ENCODE measurements at regions of chr20 and their contacts with region 1.

Region 1: GRCh38 chr20:32779500-32780211 is 17.5 kb downstream of the DNMT3B start:
- DNase-seq: peak in 1 of 2 experiments; percentile 86
- H3K4me3 ChIP-seq: no peak overlapping the region
- H3K27ac ChIP-seq: peak overlapping the region; percentile 73; the same call in 1 of the 2 replicates
- H3K4me1 ChIP-seq: peaks cover 22 to 46% (median 30%) of the 10 kb centered on the region in 4 experiments
- H3K27me3 ChIP-seq: no peaks in the 10 kb centered on the region
- CTCF ChIP-seq: peak in 1 of 3 experiments; percentile 25; a peak in 1 of 4 replicates
- EP300 ChIP-seq: no peak
- POLR2A ChIP-seq: no peak
- RAD21 ChIP-seq: no peak

Region 2: GRCh38 chr20:32674362-32674789 is 105.3 kb before region 1 on chr20:
- CTCF ChIA-PET with region 1: interaction called, 221 read pairs
- POLR2A ChIA-PET with region 1: interaction called, 14 read pairs
- DNase-seq: peak in 1 of 2 experiments; percentile 83
- H3K4me3 ChIP-seq: no peak overlapping the region
- H3K27ac ChIP-seq: no peak overlapping the region
- H3K4me1 ChIP-seq: peaks cover 4 to 15% (median 14%) of the 10 kb centered on the region in 4 experiments
- H3K27me3 ChIP-seq: no peaks in the 10 kb centered on the region
- CTCF ChIP-seq: peak; percentile 66 to 85 (median 77)
- EP300 ChIP-seq: no peak
- POLR2A ChIP-seq: no peak
- RAD21 ChIP-seq: peak; percentile 91 to 93

Region 3: DNA sequence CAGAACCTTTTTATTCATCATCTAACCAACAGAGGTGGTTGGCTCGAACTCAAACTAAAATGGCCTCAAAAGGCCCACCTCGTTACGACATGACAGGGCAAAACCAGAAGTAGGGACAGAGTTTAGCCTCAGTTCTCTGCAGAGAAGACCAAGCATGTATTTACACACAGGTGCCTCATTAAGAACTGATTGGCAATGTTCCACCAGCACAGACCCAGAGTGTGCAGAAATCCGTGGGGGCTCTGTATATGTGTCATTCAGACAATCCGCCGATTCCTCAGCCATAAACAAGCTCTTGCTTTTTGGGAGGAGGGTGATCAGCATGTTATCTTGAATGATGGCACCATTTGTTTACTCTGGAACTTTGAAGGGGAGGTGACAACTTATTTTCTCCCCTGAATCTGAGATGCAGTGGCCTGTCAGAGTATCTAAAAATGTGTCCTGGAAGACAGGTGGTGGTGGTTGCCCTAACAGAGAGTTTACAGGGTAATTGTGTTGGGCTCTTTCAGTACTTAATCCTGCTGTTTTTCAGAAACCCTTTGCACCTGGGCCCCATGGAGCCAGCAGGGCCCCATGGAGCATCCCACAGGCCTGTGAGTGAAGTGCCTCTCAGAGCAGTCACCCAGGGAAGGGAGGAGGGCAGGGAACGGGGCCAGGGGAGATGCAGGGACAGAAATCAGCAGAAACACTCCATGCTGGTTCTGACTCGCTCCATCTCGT is 76.8 kb before region 1 on chr20:
- CTCF ChIA-PET with region 1: interaction called, 16 read pairs
- POLR2A ChIA-PET with region 1: interaction called, 10 read pairs
- DNase-seq: no peak
- H3K4me3 ChIP-seq: no peak overlapping the region
- H3K27ac ChIP-seq: no peak overlapping the region
- H3K4me1 ChIP-seq: peaks cover 2 to 9% (median 6%) of the 10 kb centered on the region in 4 experiments
- H3K27me3 ChIP-seq: no peaks in the 10 kb centered on the region
- CTCF ChIP-seq: no peak
- EP300 ChIP-seq: no peak
- POLR2A ChIP-seq: no peak
- RAD21 ChIP-seq: peak in 1 of 2 experiments; percentile 16; a peak in 1 of 4 replicates

Region 4: GRCh38 chr20:32731393-32732266 is 48.0 kb before region 1 on chr20:
- CTCF ChIA-PET with region 1: interaction called, 78 read pairs
- POLR2A ChIA-PET with region 1: interaction called, 4 read pairs
- DNase-seq: no peak
- H3K4me3 ChIP-seq: no peak overlapping the region
- H3K27ac ChIP-seq: no peak overlapping the region; the same call in 1 of the 2 replicates
- H3K4me1 ChIP-seq: peaks cover 0 to 6% (median 2%) of the 10 kb centered on the region in 4 experiments; a peak in 4 of 7 replicates
- H3K27me3 ChIP-seq: no peaks in the 10 kb centered on the region
- CTCF ChIP-seq: no peak
- EP300 ChIP-seq: no peak
- POLR2A ChIP-seq: no peak
- RAD21 ChIP-seq: no peak

Region 5: DNA sequence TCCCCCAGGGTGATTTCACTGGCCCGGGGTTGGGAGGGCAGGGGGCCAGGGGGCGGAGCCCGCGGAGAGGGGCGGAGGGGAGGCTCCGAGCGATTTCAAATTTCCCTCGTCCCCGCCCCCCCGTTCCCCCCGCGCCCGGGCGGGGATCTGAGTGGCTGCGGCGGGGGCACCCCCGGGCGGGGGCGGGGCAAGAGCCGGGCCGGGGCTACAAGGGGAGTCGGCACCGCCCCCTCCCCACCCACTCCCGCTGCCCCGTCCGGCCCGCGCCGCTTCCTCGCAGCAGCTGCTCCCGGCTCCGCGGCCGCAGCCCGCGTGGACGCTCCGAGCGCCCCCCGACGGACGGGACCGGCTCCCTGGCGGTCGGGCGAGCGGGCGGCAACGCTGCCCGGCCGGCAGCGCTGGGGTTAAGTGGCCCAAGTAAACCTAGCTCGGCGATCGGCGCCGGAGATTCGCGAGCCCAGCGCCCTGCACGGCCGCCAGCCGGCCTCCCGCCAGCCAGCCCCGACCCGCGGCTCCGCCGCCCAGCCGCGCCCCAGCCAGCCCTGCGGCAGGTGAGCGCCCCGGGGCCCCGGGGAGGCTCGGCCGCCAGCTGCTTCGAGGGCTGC is 17.4 kb before region 1 on chr20 and contains the start of gene DNMT3B:
- CTCF ChIA-PET with region 1: interaction called, 70 read pairs
- POLR2A ChIA-PET with region 1: interaction called, 209 read pairs
- DNase-seq: peak; percentile 82 to 97
- H3K4me3 ChIP-seq: peak within 1 kb of the TSS; percentile 92 to 100 (median 96)
- H3K27ac ChIP-seq: peak within 1 kb of the TSS; percentile 75
- H3K4me1 ChIP-seq: peaks cover 10 to 16% (median 13%) of the 10 kb centered on the region in 4 experiments
- H3K27me3 ChIP-seq: no peaks in the 10 kb centered on the region
- CTCF ChIP-seq: peak in 1 of 3 experiments; percentile 37; a peak in 2 of 4 replicates
- EP300 ChIP-seq: no peak
- POLR2A ChIP-seq: peak; percentile 81 to 89
- RAD21 ChIP-seq: peak in 1 of 2 experiments; percentile 37; a peak in 2 of 4 replicates
- total RNA-seq, gene DNMT3B: 1,016 and 1,038 TPM in 2 replicates

Region 6: GRCh38 chr20:32796981-32797451 is 17.4 kb after region 1 on chr20:
- CTCF ChIA-PET with region 1: interaction called, 88 read pairs
- POLR2A ChIA-PET with region 1: interaction called, 12 read pairs
- DNase-seq: no peak
- H3K4me3 ChIP-seq: no peak overlapping the region
- H3K27ac ChIP-seq: 0 out of 2 replicates have a peak overlapping the region, but pooled peaks have one; percentile 14
- H3K4me1 ChIP-seq: peaks cover 0 to 4% (median 2%) of the 10 kb centered on the region in 4 experiments; a peak in 2 of 7 replicates
- H3K27me3 ChIP-seq: no peaks in the 10 kb centered on the region
- CTCF ChIP-seq: no peak
- EP300 ChIP-seq: no peak
- POLR2A ChIP-seq: no peak
- RAD21 ChIP-seq: no peak